ENCODE measurements at regions of chr7 and their contacts with region 1.

Region 1: DNA sequence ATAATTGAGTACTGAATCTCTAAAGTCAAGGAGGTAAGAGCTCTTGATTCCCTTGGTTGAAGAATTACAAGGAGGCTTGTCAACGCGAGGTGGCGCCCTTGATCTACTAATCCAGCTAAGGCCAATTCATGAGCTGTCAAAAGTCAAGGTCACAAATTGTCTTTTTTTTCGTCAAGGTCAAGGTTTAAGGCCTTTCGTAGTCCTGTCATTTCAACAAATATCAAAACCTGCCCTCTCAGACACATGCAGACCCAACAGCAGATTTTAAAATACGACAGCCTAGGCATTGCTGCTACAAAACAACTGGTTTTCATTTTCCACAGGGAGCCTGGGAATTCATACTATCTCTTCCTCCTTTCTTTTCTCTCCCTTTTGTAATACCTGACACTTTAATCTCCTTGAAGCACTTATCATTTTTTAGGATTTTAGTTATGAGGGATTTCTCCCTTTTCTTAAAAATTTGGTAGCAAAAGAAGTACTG is 3.6 kb downstream of the HOXA13 start:
- DNase-seq: peak; percentile 37
- H3K4me3 ChIP-seq: no peak overlapping the region
- H3K27ac ChIP-seq: no peak overlapping the region
- H3K4me1 ChIP-seq: peaks cover 28% of the 10 kb centered on the region
- H3K27me3 ChIP-seq: peaks cover 79% of the 10 kb centered on the region
- CTCF ChIP-seq: peak; percentile 74 to 85

Region 2: DNA sequence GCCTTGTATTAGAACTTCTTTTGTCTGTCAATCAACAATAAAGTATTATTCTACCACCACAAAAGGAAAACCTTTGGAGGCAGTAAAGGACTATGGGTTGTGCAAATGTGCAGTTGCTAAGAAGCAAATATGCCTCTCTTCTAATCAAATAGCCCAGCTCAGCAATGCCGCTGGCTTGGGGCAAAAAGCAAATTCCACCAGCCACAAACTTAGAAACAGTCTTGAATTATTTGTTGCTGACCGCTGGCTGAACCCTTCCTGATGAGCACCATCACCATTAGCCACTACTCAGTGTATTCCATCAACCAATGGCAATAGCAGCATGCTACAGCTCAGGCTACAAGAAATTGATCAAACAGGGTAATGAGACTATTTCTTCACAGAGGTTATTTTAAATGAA is 382.9 kb before region 1 on chr7:
- CTCF ChIA-PET with region 1: no interaction called
- dilution Hi-C with region 1: no loop called
- in situ Hi-C with region 1: no loop called
- intact Hi-C with region 1: no loop called
- DNase-seq: no peak
- H3K4me3 ChIP-seq: no peak overlapping the region
- H3K27ac ChIP-seq: no peak overlapping the region
- H3K4me1 ChIP-seq: no peaks in the 10 kb centered on the region
- H3K27me3 ChIP-seq: no peaks in the 10 kb centered on the region
- CTCF ChIP-seq: no peak

Region 3: GRCh38 chr7:27329911-27330310 is 133.6 kb after region 1 on chr7:
- CTCF ChIA-PET with region 1: no interaction called
- dilution Hi-C with region 1: no loop called
- in situ Hi-C with region 1: no loop called
- intact Hi-C with region 1: loop called (anchors 5 kb)
- DNase-seq: no peak
- H3K4me3 ChIP-seq: no peak overlapping the region
- H3K27ac ChIP-seq: no peak overlapping the region
- H3K4me1 ChIP-seq: peaks cover 5% of the 10 kb centered on the region
- H3K27me3 ChIP-seq: no peaks in the 10 kb centered on the region
- CTCF ChIP-seq: peak in 1 of 2 donors; percentile 40

Region 4: GRCh38 chr7:27586825-27587224 is 390.5 kb after region 1 on chr7:
- CTCF ChIA-PET with region 1: no interaction called
- dilution Hi-C with region 1: loop called (anchors 25 kb)
- in situ Hi-C with region 1: loop called (anchors 10 kb)
- intact Hi-C with region 1: no loop called
- DNase-seq: no peak
- H3K4me3 ChIP-seq: no peak overlapping the region
- H3K27ac ChIP-seq: no peak overlapping the region
- H3K4me1 ChIP-seq: no peaks in the 10 kb centered on the region
- H3K27me3 ChIP-seq: no peaks in the 10 kb centered on the region
- CTCF ChIP-seq: no peak

Region 5: DNA sequence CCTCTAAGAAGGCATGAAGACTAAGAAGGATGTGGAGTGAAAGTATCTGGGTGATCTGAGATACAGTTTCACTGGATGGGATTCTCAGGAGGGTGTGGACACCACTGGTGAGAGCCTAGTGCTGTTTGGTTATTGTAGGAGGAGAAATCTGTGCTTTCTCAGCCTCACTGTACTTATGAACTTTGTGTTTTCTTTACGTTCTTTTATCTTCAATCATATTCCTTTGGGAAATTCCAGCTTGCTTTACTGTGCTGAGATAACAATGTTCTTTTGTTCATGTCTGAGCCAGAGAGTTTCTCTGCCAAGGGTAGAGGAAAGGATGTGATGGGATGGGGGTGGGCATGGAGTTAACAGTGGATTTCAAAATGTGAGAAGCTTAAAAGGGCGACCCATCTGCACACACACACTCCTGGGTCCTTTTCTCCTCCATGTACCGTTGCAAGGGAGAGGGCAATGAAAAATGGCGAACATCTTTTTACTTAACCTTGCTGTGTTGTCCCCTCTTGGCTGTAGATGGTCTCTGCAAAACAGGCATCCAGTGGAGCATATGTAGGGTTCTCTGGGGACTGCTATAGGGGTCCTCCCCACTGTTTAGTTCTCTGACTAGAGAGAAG is 518.6 kb after region 1 on chr7:
- CTCF ChIA-PET with region 1: no interaction called
- dilution Hi-C with region 1: no loop called
- in situ Hi-C with region 1: no loop called
- intact Hi-C with region 1: loop called (anchors 1 kb)
- DNase-seq: peak; percentile 92
- H3K4me3 ChIP-seq: no peak overlapping the region
- H3K27ac ChIP-seq: peak overlapping the region; percentile 20
- H3K4me1 ChIP-seq: peaks cover 7% of the 10 kb centered on the region
- H3K27me3 ChIP-seq: no peaks in the 10 kb centered on the region
- CTCF ChIP-seq: no peak

Region 6: DNA sequence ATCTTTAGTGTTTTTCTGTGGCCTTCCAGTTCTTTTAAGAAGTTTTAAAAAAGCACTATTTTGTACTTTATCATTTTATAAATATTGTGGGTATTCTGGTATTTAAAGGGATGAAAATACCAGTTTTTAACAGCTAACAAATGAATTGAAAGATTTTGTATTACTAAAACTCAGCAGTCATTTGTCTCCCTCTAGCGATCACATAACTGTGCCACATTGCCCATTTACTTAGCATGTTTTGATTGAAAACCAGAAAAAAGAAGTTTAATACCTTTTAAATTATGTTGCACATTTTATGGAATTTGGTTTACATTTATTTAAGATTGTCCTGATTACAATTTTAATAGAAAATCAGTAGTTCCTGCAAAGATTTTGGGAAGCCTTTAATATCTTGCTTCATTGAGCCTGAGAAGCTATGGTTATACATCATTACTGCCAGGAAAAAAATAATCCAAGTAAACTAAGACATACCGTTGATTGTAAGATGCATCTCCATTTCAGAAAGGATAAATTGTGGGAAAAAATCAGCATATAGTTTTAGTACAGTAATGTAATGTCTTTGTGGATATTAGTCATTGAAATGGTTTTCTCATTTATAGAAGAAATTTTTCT is 578.5 kb after region 1 on chr7:
- CTCF ChIA-PET with region 1: no interaction called
- dilution Hi-C with region 1: no loop called
- in situ Hi-C with region 1: loop called in 1 of 2 experiments (anchors 10 kb)
- intact Hi-C with region 1: loop called (anchors 10 kb)
- DNase-seq: peak; percentile 8
- H3K4me3 ChIP-seq: no peak overlapping the region
- H3K27ac ChIP-seq: no peak overlapping the region
- H3K4me1 ChIP-seq: peaks cover 9% of the 10 kb centered on the region
- H3K27me3 ChIP-seq: no peaks in the 10 kb centered on the region
- CTCF ChIP-seq: peak; percentile 53 to 58

Region 7: DNA sequence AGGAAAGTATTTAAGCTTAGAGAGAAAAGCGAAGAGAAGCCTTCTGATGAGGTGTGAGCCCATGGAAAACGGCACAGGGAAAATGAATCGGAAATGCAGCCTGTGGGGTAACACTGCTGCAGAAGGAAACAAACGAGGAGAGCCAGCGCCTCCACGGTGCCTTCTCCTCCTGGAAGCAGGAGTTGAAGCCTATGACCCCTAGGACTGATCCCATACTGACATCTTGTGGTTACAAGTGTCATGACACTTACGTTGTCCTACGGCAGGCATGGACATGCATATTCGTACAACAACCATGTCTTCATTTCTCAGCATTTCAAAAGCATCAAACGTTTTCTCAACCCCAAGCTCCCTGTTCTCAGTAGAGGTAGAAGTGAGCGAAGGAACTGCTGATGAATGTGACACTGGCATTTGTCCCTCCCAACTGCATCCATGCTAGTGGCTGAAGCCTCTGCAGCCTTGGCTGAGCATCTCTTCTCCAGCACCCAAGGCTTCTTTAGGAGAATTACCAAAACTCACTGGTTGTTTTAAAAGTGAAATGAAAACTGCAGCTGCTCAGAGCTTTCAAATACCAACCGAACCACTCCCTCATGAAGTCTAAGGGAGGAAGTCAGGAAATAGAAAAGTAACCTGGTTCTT is 824.1 kb after region 1 on chr7:
- CTCF ChIA-PET with region 1: no interaction called
- dilution Hi-C with region 1: no loop called
- in situ Hi-C with region 1: loop called in 1 of 2 experiments (anchors 5 kb)
- intact Hi-C with region 1: loop called (anchors 1 kb)
- DNase-seq: peak; percentile 73
- H3K4me3 ChIP-seq: no peak overlapping the region
- H3K27ac ChIP-seq: no peak overlapping the region
- H3K4me1 ChIP-seq: peaks cover 6% of the 10 kb centered on the region
- H3K27me3 ChIP-seq: no peaks in the 10 kb centered on the region
- CTCF ChIP-seq: peak; percentile 89 to 92

Region 8: GRCh38 chr7:28096713-28097112 is 900.4 kb after region 1 on chr7:
- CTCF ChIA-PET with region 1: interaction called, 11 read pairs
- dilution Hi-C with region 1: no loop called
- in situ Hi-C with region 1: loop called in 1 of 2 experiments (anchors 25 kb)
- intact Hi-C with region 1: loop called (anchors 1 kb)
- DNase-seq: no peak
- H3K4me3 ChIP-seq: no peak overlapping the region
- H3K27ac ChIP-seq: no peak overlapping the region
- H3K4me1 ChIP-seq: no peaks in the 10 kb centered on the region
- H3K27me3 ChIP-seq: no peaks in the 10 kb centered on the region
- CTCF ChIP-seq: peak; percentile 80 to 89

Measured in mammary epithelial cell (primary cell).